Pancreas (tissue), 10 donors: ENCODE measurements at regions of chr10 and their contacts with region 1.

Region 1: DNA sequence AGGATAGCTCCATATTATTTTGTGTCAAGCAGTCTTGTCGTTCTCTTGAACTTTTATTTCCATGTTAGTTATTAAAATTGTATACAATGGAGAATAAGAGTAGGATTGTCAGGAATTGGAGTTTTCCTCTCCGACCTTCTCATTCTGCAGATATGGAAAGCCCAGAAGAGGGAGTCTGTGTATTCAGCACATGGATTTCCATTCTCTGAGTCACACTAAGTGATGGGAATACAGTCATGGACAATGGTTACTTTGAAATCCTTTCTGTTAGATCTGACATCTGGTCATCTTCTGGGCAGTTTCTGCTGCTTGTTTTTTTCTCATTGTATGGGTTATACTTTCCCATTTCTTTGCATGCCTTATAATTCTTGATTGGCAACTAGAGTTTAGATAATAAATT is 5.0 kb upstream of the TASOR2 start:
- DNase-seq: no peak
- ATAC-seq: no peak
- H3K4me3 ChIP-seq: no peak overlapping the region
- H3K27ac ChIP-seq: no peak overlapping the region
- H3K4me1 ChIP-seq: no peaks in the 10 kb centered on the region
- H3K27me3 ChIP-seq: no peaks in the 10 kb centered on the region
- CTCF ChIP-seq: no peak

Region 2: DNA sequence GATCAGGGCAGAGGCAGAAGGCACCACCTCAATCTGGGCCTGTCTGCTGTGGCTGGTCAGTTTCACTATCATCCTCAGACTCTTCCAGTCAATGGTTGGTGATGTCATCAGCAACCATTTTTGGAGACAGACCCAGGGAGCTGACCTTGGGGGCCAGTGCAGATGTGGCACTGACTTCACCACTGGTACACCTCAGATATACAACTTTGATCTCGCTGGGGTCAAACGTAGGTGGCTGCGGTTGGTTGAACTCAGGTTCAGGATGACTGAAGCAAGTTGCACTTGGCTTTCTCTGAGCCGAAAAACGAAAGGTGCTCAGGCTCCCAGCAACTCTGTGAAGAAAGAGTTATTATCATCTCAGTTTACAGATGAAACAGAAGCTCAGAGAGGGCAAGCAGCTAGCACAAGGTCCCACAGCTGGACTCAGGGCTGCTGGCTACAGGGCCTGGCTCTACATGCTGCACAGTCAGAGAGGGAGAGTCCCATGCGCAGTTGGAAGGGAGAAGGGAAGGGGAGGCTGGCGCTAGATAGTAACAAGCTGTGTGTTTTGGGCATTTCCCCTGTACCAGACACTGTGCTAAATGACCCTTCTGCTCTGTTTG is 182.9 kb after region 1 on chr10:
- intact Hi-C with region 1: loop called in 1 of 3 experiments (anchors 10 kb)
- DNase-seq: no peak
- ATAC-seq: no peak
- H3K4me3 ChIP-seq: no peak overlapping the region
- H3K27ac ChIP-seq: no peak overlapping the region
- H3K4me1 ChIP-seq: no peaks in the 10 kb centered on the region
- H3K27me3 ChIP-seq: no peaks in the 10 kb centered on the region
- CTCF ChIP-seq: no peak

Region 3: DNA sequence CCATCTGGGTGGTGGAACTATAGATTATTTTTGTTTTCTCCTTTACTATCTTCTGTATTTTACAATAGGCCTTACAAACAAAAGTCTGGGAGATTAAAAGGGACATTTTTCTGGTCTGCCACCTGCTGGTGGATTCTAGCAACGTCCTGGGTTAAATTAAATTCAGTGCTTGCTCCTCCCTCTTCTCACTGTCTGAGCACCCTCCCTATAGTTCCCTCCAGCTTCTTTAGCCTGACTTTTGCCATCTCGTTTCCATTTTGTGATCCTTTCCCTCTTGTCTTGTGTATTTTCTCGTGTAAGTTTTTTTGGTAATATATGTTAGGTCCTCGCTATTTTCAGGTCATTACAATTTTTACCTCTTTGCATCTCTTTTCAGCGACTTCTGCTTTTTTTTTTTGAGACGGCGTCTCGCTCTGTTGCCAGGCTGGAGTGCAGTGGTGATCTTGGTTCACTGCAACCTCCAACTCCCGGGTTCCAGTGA is 193.9 kb after region 1 on chr10:
- intact Hi-C with region 1: loop called in 2 of 3 experiments (anchors 10 kb)
- DNase-seq: peak in 2 of 6 donors; percentile 27 to 74
- ATAC-seq: peak; percentile 80 to 97 (median 88)
- H3K4me3 ChIP-seq: no peak overlapping the region
- H3K27ac ChIP-seq: no peak overlapping the region
- H3K4me1 ChIP-seq: no peaks in the 10 kb centered on the region
- H3K27me3 ChIP-seq: no peaks in the 10 kb centered on the region
- CTCF ChIP-seq: peak; percentile 26 to 71 (median 60)